Right ventricle myocardium inferior (tissue), 1 donor: ENCODE measurements at regions of chr12 and their contacts with region 1.

Region 1: GRCh38 chr12:121697098-121697698 is 15.4 kb upstream of the TMEM120B start:
- DNase-seq: no peak
- ATAC-seq: no peak

Region 2: GRCh38 chr12:121773011-121773777 is 76.0 kb after region 1 on chr12:
- intact Hi-C with region 1: loop called (anchors 1 kb)
- DNase-seq: peak; percentile 85
- ATAC-seq: peak; percentile 74

Region 3: DNA sequence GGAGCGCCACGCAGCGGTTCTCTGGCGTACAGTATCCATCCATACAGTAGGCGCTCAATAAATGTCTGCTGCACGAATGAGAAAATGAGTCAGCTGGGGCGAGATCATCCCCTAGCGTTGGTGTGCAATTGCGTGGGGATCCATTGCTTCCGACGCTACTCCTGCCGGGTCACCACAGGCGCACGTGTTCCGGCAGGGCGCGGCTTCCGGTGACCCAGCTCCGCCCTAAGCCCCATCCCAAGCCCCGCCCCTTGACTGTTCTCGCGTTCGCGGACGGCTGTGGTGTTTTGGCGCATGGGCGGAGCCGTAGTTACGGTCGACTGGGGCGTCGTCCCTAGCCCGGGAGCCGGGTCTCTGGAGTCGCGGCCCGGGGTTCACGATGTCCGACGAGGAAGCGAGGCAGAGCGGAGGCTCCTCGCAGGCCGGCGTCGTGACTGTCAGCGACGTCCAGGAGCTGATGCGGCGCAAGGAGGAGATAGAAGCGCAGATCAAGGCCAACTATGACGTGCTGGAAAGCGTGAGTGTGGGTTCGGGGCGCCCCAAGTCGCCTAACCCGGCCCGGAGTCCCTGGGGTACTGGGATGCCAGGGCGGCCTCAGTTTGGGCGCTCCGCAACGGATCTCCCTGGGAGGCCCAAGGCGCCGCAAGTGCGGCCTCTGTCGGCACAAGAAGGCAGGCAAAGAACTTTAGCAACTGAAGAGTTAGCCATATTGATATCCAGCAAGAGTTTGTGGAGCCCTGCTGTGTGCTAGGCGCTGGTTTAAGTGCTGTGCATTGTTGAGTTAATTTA is 191.5 kb after region 1 on chr12 and contains the start of gene PSMD9:
- intact Hi-C with region 1: loop called (anchors 10 kb)
- DNase-seq: peak; percentile 99
- ATAC-seq: peak; percentile 99
- total RNA-seq, gene PSMD9: 35.4 TPM